MCF 10A (cell line): ENCODE measurements at regions of chr12 and their contacts with region 1.

Region 1: GRCh38 chr12:48851883-48852733 is at the start of gene DDX23:
- DNase-seq: peak; percentile 98
- H3K4me3 Mint-ChIP-seq: peak within 1 kb of the TSS; percentile 97
- H3K27ac Mint-ChIP-seq: peak within 1 kb of the TSS; percentile 93
- H3K4me1 Mint-ChIP-seq: peaks cover 21% of the 10 kb centered on the region
- H3K27me3 Mint-ChIP-seq: no peaks in the 10 kb centered on the region
- CTCF ChIP-seq: no peak
- total RNA-seq, gene DDX23: 67.8 and 88.4 TPM in 2 replicates

Region 2: GRCh38 chr12:48865434-48866290 is 13.6 kb after region 1 on chr12 and contains the start of gene RND1:
- CTCF ChIA-PET with region 1: interaction called, 52 read pairs
- POLR2A ChIA-PET with region 1: interaction called, 33 read pairs
- intact Hi-C with region 1: no loop called
- DNase-seq: peak; percentile 95
- H3K4me3 Mint-ChIP-seq: peak within 1 kb of the TSS; percentile 81
- H3K27ac Mint-ChIP-seq: peak within 1 kb of the TSS; percentile 71
- H3K4me1 Mint-ChIP-seq: peaks cover 16% of the 10 kb centered on the region
- H3K27me3 Mint-ChIP-seq: no peaks in the 10 kb centered on the region
- CTCF ChIP-seq: no peak
- total RNA-seq, gene RND1: 1.0 and 1.2 TPM in 2 replicates

Region 3: GRCh38 chr12:48890657-48891418 is 38.7 kb after region 1 on chr12:
- CTCF ChIA-PET with region 1: interaction called, 114 read pairs
- POLR2A ChIA-PET with region 1: interaction called, 16 read pairs
- intact Hi-C with region 1: loop called (anchors 1 kb)
- DNase-seq: peak; percentile 76
- H3K4me3 Mint-ChIP-seq: no peak overlapping the region
- H3K27ac Mint-ChIP-seq: no peak overlapping the region
- H3K4me1 Mint-ChIP-seq: no peaks in the 10 kb centered on the region
- H3K27me3 Mint-ChIP-seq: peaks cover 20% of the 10 kb centered on the region
- CTCF ChIP-seq: peak; percentile 85

Region 4: GRCh38 chr12:48936379-48936979 is 84.4 kb after region 1 on chr12:
- CTCF ChIA-PET with region 1: interaction called, 56 read pairs
- POLR2A ChIA-PET with region 1: interaction called, 11 read pairs
- intact Hi-C with region 1: loop called (anchors 1 kb)
- DNase-seq: peak; percentile 62
- H3K4me3 Mint-ChIP-seq: no peak overlapping the region
- H3K27ac Mint-ChIP-seq: no peak overlapping the region
- H3K4me1 Mint-ChIP-seq: no peaks in the 10 kb centered on the region
- H3K27me3 Mint-ChIP-seq: no peaks in the 10 kb centered on the region
- CTCF ChIP-seq: peak; percentile 77

Region 5: GRCh38 chr12:48977315-48978281 is 125.5 kb after region 1 on chr12:
- CTCF ChIA-PET with region 1: interaction called, 26 read pairs
- POLR2A ChIA-PET with region 1: no interaction called
- intact Hi-C with region 1: loop called (anchors 2 kb)
- DNase-seq: peak; percentile 54
- H3K4me3 Mint-ChIP-seq: no peak overlapping the region
- H3K27ac Mint-ChIP-seq: no peak overlapping the region
- H3K4me1 Mint-ChIP-seq: peaks cover 6% of the 10 kb centered on the region
- H3K27me3 Mint-ChIP-seq: peaks cover 58% of the 10 kb centered on the region
- CTCF ChIP-seq: peak; percentile 77

Region 6: DNA sequence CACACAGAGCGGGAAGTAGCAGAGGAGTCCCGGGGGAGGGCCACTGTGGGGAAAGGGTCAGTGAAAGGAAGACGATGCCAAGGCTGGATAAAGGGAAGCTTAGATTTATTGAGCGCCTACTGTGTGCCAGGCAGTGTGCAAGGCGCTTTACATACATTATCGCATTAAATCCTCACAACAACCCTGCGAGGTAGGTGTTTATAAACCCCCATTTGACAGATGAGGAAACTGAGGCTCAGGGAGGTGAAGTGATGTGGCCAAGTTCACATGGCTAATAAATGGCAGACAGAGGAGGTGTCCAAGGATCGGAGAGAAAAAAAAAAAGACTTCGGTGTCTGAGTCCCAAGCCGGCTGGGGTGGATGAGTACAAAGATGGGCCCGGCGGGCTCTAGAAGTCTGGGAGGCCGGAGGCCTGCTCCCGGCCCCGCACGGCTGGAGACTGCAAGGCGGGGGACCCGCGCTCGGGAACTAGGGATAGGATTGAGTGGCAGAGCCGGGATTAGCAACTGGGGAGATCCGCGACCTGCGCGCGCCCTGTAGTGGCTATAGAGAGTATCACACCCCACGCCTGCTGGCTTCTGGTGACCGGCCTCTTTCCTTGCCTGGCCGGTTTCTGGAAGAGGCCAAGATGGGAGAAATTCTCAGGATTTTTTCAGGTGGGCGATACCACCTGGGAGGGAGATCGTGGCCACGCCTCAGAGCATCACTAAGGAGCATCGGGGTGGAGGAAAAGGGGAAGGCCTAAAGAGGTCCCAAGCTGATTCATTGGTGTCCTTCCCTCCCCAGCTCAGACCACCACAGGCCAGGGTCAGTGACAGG is 143.2 kb after region 1 on chr12:
- CTCF ChIA-PET with region 1: interaction called, 21 read pairs
- POLR2A ChIA-PET with region 1: interaction called, 10 read pairs
- intact Hi-C with region 1: loop called (anchors 1 kb)
- DNase-seq: peak; percentile 80
- H3K4me3 Mint-ChIP-seq: peak overlapping the region; percentile 71
- H3K27ac Mint-ChIP-seq: no peak overlapping the region
- H3K4me1 Mint-ChIP-seq: peaks cover 10% of the 10 kb centered on the region
- H3K27me3 Mint-ChIP-seq: peaks cover 3% of the 10 kb centered on the region
- CTCF ChIP-seq: peak; percentile 85

Region 7: DNA sequence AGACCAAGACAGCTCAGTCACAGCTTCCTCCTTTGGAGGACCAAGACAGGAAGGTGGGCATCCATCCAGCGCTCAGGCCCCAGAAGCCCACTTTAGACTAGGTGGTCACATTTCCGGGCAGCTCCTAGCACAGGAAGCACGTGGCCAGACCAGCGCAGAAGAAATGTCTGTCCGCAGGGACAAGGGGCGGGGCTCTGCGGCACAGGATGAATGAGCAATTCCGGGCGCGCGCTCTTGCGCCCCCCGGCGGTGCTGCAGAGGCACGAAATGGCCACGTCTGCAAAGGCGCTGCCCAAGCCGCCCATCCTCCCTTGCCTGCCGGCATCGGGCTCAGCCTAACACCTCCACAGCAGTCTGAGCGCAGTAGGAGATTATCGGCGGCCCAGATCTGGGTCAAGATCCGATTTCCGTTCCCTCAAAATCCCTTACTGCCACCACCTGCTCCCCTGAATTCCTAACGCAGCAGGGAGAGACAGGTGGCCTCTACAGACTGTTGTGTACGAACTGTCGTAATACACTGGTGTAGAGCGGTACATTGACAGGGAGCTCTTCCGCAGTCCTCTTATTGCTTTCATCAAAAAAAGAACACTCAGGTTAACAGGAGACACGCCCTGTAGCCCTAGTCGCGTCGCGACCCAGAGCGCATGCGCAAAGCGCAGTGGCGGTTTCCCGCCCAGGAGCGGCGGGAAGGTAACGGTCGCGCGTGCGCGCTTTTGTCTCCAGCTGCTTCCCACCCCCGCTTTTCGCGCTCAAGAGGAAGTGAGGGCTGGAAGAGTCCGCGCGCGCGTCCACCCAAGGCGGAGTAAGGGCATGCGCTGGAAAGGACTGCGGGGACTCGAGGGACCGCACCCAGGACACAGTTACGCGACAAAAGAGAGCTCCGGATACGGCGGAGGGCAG is 278.3 kb after region 1 on chr12:
- CTCF ChIA-PET with region 1: no interaction called
- POLR2A ChIA-PET with region 1: interaction called, 14 read pairs
- intact Hi-C with region 1: no loop called
- DNase-seq: peak; percentile 91
- H3K4me3 Mint-ChIP-seq: peak overlapping the region; percentile 94
- H3K27ac Mint-ChIP-seq: peak overlapping the region; percentile 96
- H3K4me1 Mint-ChIP-seq: no peaks in the 10 kb centered on the region
- H3K27me3 Mint-ChIP-seq: no peaks in the 10 kb centered on the region
- CTCF ChIP-seq: peak; percentile 91